Esophagus squamous epithelium (tissue), 5 donors: ENCODE measurements at regions of chr3 and their contacts with region 1.

Region 1: DNA sequence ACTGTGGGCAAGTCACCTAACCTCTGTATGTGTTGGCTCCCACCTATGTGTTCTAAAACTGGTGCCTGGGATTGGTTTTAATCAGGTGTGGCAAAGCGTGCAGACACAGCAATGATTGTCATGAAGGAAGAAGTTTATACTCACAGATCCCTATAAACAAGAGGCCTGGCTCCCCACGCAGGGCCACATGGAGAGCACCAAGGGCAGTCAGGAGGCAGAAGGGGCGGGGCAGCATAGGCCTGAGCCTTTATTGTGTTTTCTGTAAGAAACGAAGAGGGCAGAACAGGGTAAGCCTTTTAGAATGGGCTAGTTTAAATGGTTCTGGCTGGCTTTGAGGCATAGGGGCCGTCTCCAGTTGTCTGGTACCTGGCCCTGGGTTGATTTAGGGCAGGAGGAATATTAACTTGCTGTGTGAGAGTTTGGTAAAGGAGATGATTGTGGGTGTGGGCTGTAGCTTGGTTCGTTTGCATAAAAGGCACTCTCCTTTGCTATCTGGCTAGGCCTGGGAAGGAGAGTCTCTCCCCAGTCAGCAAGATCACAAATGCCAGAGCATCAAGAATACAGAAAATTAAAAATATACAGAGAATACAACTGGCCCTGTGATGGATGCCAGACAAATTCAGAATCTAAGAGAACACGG is 2.2 kb upstream of the FBXW12 start:
- DNase-seq: no peak
- H3K4me3 ChIP-seq: no peak overlapping the region
- H3K27ac ChIP-seq: no peak overlapping the region
- H3K4me1 ChIP-seq: no peaks in the 10 kb centered on the region
- H3K27me3 ChIP-seq: no peaks in the 10 kb centered on the region
- CTCF ChIP-seq: no peak
- POLR2A ChIP-seq: no peak

Region 2: GRCh38 chr3:48285132-48285531 is 84.7 kb before region 1 on chr3:
- intact Hi-C with region 1: loop called (anchors 10 kb)
- DNase-seq: no peak
- H3K4me3 ChIP-seq: no peak overlapping the region
- H3K27ac ChIP-seq: no peak overlapping the region
- H3K4me1 ChIP-seq: no peaks in the 10 kb centered on the region
- H3K27me3 ChIP-seq: no peaks in the 10 kb centered on the region
- CTCF ChIP-seq: no peak
- POLR2A ChIP-seq: no peak

Region 3: GRCh38 chr3:48429317-48429959 is 59.6 kb after region 1 on chr3:
- intact Hi-C with region 1: no loop called
- DNase-seq: no peak
- H3K4me3 ChIP-seq: peak overlapping the region; percentile 67 to 90 (median 82)
- H3K27ac ChIP-seq: peak overlapping the region; percentile 95 to 98 (median 96)
- H3K4me1 ChIP-seq: peaks cover 64 to 93% (median 73%) of the 10 kb centered on the region in 3 donors
- H3K27me3 ChIP-seq: no peaks in the 10 kb centered on the region
- CTCF ChIP-seq: peak in 2 of 6 experiments; percentile 4 to 10
- POLR2A ChIP-seq: peak in 1 of 4 donors; percentile 12